Naive thymus-derived CD4-positive, alpha-beta T cell (primary cell): ENCODE measurements at regions of chr10 and their contacts with region 1.

Region 1: DNA sequence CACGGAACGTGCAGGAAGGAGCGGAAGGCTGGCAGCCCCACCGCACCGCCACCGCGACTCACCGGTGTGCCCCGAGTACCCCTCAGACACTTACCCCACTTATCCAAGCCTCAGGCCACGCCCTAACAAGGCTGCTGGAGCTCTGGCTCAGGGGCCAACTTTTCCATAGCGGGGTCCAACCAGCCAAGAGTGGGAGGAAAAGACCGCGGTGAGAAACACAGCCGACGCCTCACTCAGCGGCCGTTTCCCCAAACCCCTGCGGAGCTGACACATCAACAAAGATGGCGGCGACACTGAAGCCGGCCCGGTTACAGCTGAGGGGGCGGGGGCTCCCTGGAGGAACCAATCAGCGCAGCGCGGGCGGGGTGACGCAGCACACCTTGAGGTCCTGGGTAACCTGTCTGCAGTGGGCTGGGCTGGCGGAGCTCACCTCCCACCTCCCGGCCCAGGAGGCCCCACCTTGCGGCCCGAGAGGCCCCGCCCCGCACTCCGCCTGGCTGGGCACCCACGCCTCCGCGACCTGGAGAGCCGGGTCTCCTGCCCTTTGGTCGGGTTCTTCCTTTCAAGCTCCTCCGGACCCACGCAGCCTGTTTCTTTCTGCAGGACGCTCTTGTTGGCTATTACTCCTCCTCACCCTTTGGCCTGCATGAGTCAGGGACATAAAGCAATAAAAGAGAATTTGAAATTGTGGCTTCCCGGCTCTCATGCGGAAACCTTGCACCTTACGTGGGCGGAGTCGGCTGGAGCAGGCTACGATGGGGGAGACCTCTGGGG is at the start of gene CCDC186:
- DNase-seq: peak; percentile 90 to 98 (median 97)
- ATAC-seq: peak; percentile 98
- H3K4me3 ChIP-seq: peak within 1 kb of the TSS; percentile 83
- H3K4me3 Mint-ChIP-seq: peak within 1 kb of the TSS; percentile 88 to 100 (median 96)
- H3K27ac ChIP-seq: peak within 1 kb of the TSS; percentile 88
- H3K27ac Mint-ChIP-seq: peak within 1 kb of the TSS; percentile 92 to 99 (median 98)
- H3K4me1 ChIP-seq: peaks cover 0 to 8% of the 10 kb centered on the region in 2 donors
- H3K4me1 Mint-ChIP-seq: peaks cover 17 to 51% (median 33%) of the 10 kb centered on the region in 7 donors
- H3K27me3 ChIP-seq: no peaks in the 10 kb centered on the region
- H3K27me3 Mint-ChIP-seq: peaks cover 0 to 24% (median 0%) of the 10 kb centered on the region in 5 donors
- total RNA-seq, gene CCDC186: 18.6 to 42.9 (median 34.5) TPM

Region 2: GRCh38 chr10:112183329-112184051 is 1990.6 kb before region 1 on chr10 and contains the start of gene GPAM:
- CTCF ChIA-PET with region 1: no interaction called
- POLR2A ChIA-PET with region 1: no interaction called
- intact Hi-C with region 1: loop called in 1 of 2 experiments (anchors 10 kb)
- DNase-seq: peak; percentile 93 to 100 (median 97)
- ATAC-seq: peak; percentile 100
- H3K4me3 ChIP-seq: peak within 1 kb of the TSS; percentile 88
- H3K4me3 Mint-ChIP-seq: peak within 1 kb of the TSS; percentile 87 to 98 (median 92)
- H3K27ac ChIP-seq: peak within 1 kb of the TSS; percentile 75
- H3K27ac Mint-ChIP-seq: peak within 1 kb of the TSS; percentile 84 to 99 (median 94)
- H3K4me1 ChIP-seq: peaks cover 7 to 8% of the 10 kb centered on the region in 2 donors
- H3K4me1 Mint-ChIP-seq: peaks cover 13 to 34% (median 27%) of the 10 kb centered on the region in 7 donors
- H3K27me3 ChIP-seq: no peaks in the 10 kb centered on the region
- H3K27me3 Mint-ChIP-seq: peaks cover 0 to 11% (median 0%) of the 10 kb centered on the region in 5 donors
- total RNA-seq, gene GPAM: 3.7 to 11.3 (median 6.6) TPM

Region 3: GRCh38 chr10:112446855-112447711 is 1727.0 kb before region 1 on chr10 and contains the starts of genes VTI1A and ZDHHC6:
- CTCF ChIA-PET with region 1: no interaction called
- POLR2A ChIA-PET with region 1: no interaction called
- intact Hi-C with region 1: loop called in 1 of 2 experiments (anchors 5 kb)
- DNase-seq: peak; percentile 70 to 89 (median 84)
- ATAC-seq: peak; percentile 95
- H3K4me3 ChIP-seq: peak within 1 kb of the TSS; percentile 85
- H3K4me3 Mint-ChIP-seq: peak within 1 kb of the TSS; percentile 92 to 100 (median 96)
- H3K27ac ChIP-seq: peak within 1 kb of the TSS; percentile 90
- H3K27ac Mint-ChIP-seq: peak within 1 kb of the TSS; percentile 95 to 100 (median 99)
- H3K4me1 ChIP-seq: peaks cover 23 to 25% of the 10 kb centered on the region in 2 donors
- H3K4me1 Mint-ChIP-seq: peaks cover 31 to 81% (median 65%) of the 10 kb centered on the region in 7 donors
- H3K27me3 ChIP-seq: no peaks in the 10 kb centered on the region
- H3K27me3 Mint-ChIP-seq: no peaks in the 10 kb centered on the region
- total RNA-seq, gene VTI1A: 40.2 to 56.8 (median 51.4) TPM
- total RNA-seq, gene ZDHHC6: 34.3 to 66.3 (median 50.9) TPM

Region 4: GRCh38 chr10:113960617-113961181 is 213.4 kb before region 1 on chr10:
- CTCF ChIA-PET with region 1: no interaction called
- POLR2A ChIA-PET with region 1: interaction called, 4 read pairs
- intact Hi-C with region 1: loop called (anchors 1 kb)
- DNase-seq: peak in 5 of 9 donors; percentile 4 to 34 (median 21)
- ATAC-seq: no peak
- H3K4me3 ChIP-seq: peak overlapping the region; percentile 27
- H3K4me3 Mint-ChIP-seq: peak overlapping the region; percentile 31 to 79 (median 67)
- H3K27ac ChIP-seq: no peak overlapping the region
- H3K27ac Mint-ChIP-seq: peak overlapping the region in 8 of 9 donors; percentile 30 to 92 (median 82)
- H3K4me1 ChIP-seq: peaks cover 37 to 47% of the 10 kb centered on the region in 2 donors
- H3K4me1 Mint-ChIP-seq: peaks cover 26 to 64% (median 49%) of the 10 kb centered on the region in 7 donors
- H3K27me3 ChIP-seq: no peaks in the 10 kb centered on the region
- H3K27me3 Mint-ChIP-seq: peaks cover 0 to 27% (median 6%) of the 10 kb centered on the region in 5 donors

Region 5: DNA sequence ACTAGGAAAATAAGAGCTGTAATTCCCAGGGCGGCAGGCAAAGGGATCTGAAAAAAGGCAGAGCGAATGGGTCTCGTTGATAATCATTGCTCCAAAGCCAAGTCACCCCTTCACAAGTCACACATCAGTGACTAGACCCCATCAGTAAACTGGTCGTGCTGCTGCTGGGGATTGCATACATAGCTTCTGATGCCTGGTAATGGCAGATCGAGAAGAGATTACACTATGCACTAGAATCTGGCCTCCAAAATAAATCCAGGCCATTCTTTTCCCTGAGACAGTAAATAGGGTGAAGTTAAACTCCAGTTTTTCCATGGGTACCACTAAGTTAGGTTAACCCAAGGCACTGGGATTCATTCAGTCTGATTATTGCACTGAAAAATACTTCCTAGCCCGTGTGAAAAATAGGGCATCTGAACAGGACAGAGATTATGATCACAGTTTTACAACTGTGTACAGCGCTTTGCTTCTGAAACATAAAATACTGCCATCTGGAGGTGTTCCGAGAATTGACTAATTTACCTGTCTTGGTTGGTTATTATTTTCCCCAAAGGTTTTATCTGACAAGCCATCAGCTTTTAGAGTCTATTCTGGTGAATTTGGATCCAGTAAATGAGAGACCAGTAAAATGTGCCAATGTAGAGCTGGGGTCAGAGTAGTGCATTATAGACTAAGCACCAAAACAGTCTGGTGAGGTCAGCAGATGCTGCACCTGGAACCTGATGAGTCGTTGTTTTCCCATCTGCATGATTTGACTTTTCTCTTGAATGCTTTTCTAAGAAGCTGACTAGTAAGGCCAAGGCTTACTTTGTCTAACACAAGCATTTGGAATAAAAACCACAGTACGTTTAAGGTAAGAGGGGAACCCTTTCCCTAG is 313.1 kb after region 1 on chr10:
- CTCF ChIA-PET with region 1: no interaction called
- POLR2A ChIA-PET with region 1: no interaction called
- intact Hi-C with region 1: no loop called
- DNase-seq: no peak
- ATAC-seq: no peak
- H3K4me3 ChIP-seq: no peak overlapping the region
- H3K4me3 Mint-ChIP-seq: no peak overlapping the region
- H3K27ac ChIP-seq: peak overlapping the region; percentile 17
- H3K27ac Mint-ChIP-seq: peak overlapping the region in 8 of 9 donors; percentile 10 to 82 (median 70)
- H3K4me1 ChIP-seq: peaks cover under 1 to 17% of the 10 kb centered on the region in 2 donors
- H3K4me1 Mint-ChIP-seq: peaks cover 14 to 90% (median 78%) of the 10 kb centered on the region in 7 donors
- H3K27me3 ChIP-seq: no peaks in the 10 kb centered on the region
- H3K27me3 Mint-ChIP-seq: no peaks in the 10 kb centered on the region

Region 6: DNA sequence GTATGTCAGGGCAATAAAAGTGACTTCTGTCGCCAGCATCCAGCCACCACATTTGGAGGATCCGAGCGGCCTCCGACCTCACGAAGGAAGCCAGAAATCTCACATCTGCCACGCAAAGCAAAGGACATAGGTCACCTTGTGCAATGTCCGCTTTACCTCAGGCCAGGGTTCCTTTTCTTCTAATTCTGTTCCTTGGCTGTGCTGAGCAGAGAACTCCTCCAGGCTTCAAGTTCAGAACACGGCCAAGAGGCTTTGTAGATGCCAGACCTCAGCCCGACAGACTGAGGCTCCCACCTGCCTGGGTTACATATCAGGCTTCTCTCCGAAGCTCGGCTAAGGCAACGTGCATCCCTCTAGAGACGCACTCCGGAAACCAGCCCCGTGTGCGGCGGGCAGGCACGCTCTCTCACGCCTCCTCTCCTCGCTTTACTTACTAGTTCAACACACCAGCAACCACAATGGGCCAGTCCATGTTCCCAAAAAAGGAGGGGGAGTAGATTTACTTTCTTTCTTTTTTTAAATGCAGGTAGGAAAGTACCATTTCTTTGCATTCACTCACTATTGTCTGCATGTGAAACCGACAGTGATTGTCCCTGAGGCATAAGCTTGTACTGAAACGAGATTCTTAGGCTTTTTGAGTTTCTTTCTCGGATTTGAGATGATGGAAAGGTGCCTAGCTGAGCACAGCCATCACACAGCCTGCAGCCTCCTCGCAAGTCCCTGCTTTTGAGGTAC is 352.6 kb after region 1 on chr10:
- CTCF ChIA-PET with region 1: no interaction called
- POLR2A ChIA-PET with region 1: no interaction called
- intact Hi-C with region 1: loop called (anchors 1 to 5 kb)
- DNase-seq: peak; percentile 64 to 97 (median 95)
- ATAC-seq: peak; percentile 94
- H3K4me3 ChIP-seq: peak overlapping the region; percentile 85
- H3K4me3 Mint-ChIP-seq: peak overlapping the region; percentile 88 to 100 (median 98)
- H3K27ac ChIP-seq: peak overlapping the region; percentile 94
- H3K27ac Mint-ChIP-seq: peak overlapping the region; percentile 92 to 100 (median 98)
- H3K4me1 ChIP-seq: peaks cover 35 to 45% of the 10 kb centered on the region in 2 donors
- H3K4me1 Mint-ChIP-seq: peaks cover 34 to 64% (median 53%) of the 10 kb centered on the region in 7 donors
- H3K27me3 ChIP-seq: no peaks in the 10 kb centered on the region
- H3K27me3 Mint-ChIP-seq: peaks cover 0 to 4% (median 0%) of the 10 kb centered on the region in 5 donors

Region 7: GRCh38 chr10:114937962-114938855 is 764.1 kb after region 1 on chr10 and contains the start of gene TRUB1:
- CTCF ChIA-PET with region 1: no interaction called
- POLR2A ChIA-PET with region 1: no interaction called
- intact Hi-C with region 1: loop called (anchors 1 kb)
- DNase-seq: peak; percentile 59 to 91 (median 87)
- ATAC-seq: peak; percentile 100
- H3K4me3 ChIP-seq: peak within 1 kb of the TSS; percentile 87
- H3K4me3 Mint-ChIP-seq: peak within 1 kb of the TSS; percentile 94 to 99 (median 96)
- H3K27ac ChIP-seq: peak within 1 kb of the TSS; percentile 79
- H3K27ac Mint-ChIP-seq: peak within 1 kb of the TSS; percentile 95 to 98 (median 96)
- H3K4me1 ChIP-seq: peaks cover 12 to 23% of the 10 kb centered on the region in 2 donors
- H3K4me1 Mint-ChIP-seq: peaks cover 20 to 43% (median 31%) of the 10 kb centered on the region in 7 donors
- H3K27me3 ChIP-seq: no peaks in the 10 kb centered on the region
- H3K27me3 Mint-ChIP-seq: no peaks in the 10 kb centered on the region
- total RNA-seq, gene TRUB1: 6.8 to 14.6 (median 12.9) TPM